Activated CD4-positive, alpha-beta T cell treated with anti-CD3 and anti-CD28 coated beads for 36 hours (primary cell): ENCODE measurements at regions of chr10 and their contacts with region 1.

Region 1: DNA sequence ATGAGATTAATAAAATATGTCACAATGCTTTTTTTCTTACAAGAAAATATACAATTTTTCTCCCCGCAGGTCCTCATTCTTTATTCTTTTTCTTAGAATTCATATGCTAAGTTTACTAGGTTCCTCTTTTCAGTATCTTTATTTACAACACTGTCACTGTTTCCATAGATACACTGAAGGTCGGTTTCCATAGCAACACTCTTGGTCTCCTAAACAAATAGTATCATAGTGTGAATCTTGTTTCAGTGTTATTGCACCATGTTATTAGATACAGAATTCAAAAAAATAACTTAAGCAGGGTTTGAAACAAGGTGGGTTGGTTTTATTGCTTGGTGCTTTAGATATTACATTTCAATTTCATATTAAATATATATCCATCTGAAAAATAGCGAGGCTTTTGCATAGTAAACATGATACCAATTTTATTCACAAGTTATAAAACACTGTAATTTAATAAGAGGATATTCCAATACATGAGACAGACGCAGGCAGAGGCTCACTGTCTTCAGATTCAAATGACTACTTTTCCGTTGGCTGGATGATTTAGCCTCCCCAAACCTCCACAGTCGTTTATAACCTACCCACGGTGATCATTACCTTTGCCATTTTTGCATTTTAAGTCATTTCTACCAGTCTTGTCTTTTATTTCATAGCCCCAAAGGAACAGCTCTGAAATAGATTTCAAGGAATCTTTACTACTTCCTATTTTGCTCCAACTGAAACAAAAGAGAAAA is 88.9 kb upstream of the KLF6 start:
- DNase-seq: no peak
- ATAC-seq: peak; percentile 27
- H3K4me3 Mint-ChIP-seq: peak overlapping the region; percentile 15
- H3K27ac Mint-ChIP-seq: peak overlapping the region; percentile 89
- H3K4me1 Mint-ChIP-seq: peaks cover 65% of the 10 kb centered on the region
- H3K27me3 Mint-ChIP-seq: no peaks in the 10 kb centered on the region

Region 2: GRCh38 chr10:3805791-3806461 is 68.0 kb before region 1 on chr10:
- CTCF ChIA-PET with region 1: interaction called, 4 read pairs
- POLR2A ChIA-PET with region 1: interaction called, 17 read pairs
- intact Hi-C with region 1: loop called in 1 of 2 experiments (anchors 1 kb)
- DNase-seq: peak; percentile 59
- ATAC-seq: no peak
- H3K4me3 Mint-ChIP-seq: peak overlapping the region; percentile 46
- H3K27ac Mint-ChIP-seq: no peak overlapping the region
- H3K4me1 Mint-ChIP-seq: peaks cover 63% of the 10 kb centered on the region
- H3K27me3 Mint-ChIP-seq: no peaks in the 10 kb centered on the region

Region 3: DNA sequence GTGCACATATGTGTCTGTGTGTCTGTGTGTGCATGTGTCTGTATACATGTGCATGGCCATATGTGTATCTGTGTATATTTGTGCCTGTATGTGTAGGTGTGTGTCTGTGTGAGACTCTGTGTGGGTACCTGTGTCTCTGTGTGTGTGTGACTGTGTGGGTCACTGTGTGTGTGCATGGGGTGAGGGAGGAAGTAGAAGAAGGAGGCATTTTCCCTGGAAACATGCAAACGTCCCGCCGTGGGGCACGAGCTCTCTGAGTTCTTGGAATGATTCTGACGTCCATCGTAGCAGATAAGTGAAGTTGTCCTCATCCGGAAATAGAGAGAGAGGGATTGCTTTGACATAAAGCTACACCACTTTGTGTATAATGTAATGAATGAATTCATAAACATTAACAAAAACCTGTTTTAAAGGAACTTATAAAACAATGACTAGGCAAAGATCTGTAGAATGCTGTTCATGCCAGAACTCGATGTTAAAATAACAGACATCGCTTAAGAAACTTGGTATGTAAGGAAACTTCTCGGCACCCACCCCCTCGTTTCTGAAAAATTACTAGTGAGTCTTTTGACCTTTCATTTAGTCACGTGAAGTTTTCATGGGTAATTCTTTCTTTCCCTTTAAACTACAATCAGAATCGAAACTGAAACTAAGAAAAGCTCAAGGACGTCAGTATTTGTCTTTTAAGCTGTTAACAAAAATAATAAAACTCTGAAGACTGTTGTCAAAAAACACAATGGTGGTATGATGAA is 45.3 kb before region 1 on chr10:
- CTCF ChIA-PET with region 1: no interaction called
- POLR2A ChIA-PET with region 1: interaction called, 3 read pairs
- intact Hi-C with region 1: loop called in 1 of 2 experiments (anchors 2 kb)
- DNase-seq: peak; percentile 77
- ATAC-seq: peak; percentile 62
- H3K4me3 Mint-ChIP-seq: peak overlapping the region; percentile 56
- H3K27ac Mint-ChIP-seq: peak overlapping the region; percentile 98
- H3K4me1 Mint-ChIP-seq: peaks cover 63% of the 10 kb centered on the region
- H3K27me3 Mint-ChIP-seq: no peaks in the 10 kb centered on the region

Region 4: GRCh38 chr10:3902054-3902808 is 28.3 kb after region 1 on chr10:
- CTCF ChIA-PET with region 1: interaction called, 3 read pairs
- POLR2A ChIA-PET with region 1: no interaction called
- intact Hi-C with region 1: loop called in 1 of 2 experiments (anchors 2 kb)
- DNase-seq: peak; percentile 55
- ATAC-seq: peak; percentile 48
- H3K4me3 Mint-ChIP-seq: no peak overlapping the region
- H3K27ac Mint-ChIP-seq: peak overlapping the region; percentile 78
- H3K4me1 Mint-ChIP-seq: peaks cover 25% of the 10 kb centered on the region
- H3K27me3 Mint-ChIP-seq: no peaks in the 10 kb centered on the region

Region 5: GRCh38 chr10:4034907-4035598 is 161.2 kb after region 1 on chr10:
- CTCF ChIA-PET with region 1: no interaction called
- POLR2A ChIA-PET with region 1: no interaction called
- intact Hi-C with region 1: loop called in 1 of 2 experiments (anchors 2 kb)
- DNase-seq: peak; percentile 64
- ATAC-seq: peak; percentile 63
- H3K4me3 Mint-ChIP-seq: peak overlapping the region; percentile 49
- H3K27ac Mint-ChIP-seq: peak overlapping the region; percentile 90
- H3K4me1 Mint-ChIP-seq: peaks cover 30% of the 10 kb centered on the region
- H3K27me3 Mint-ChIP-seq: no peaks in the 10 kb centered on the region